Heart right ventricle (tissue), 16 donors: ENCODE measurements at regions of chr9 and their contacts with region 1.

Region 1: DNA sequence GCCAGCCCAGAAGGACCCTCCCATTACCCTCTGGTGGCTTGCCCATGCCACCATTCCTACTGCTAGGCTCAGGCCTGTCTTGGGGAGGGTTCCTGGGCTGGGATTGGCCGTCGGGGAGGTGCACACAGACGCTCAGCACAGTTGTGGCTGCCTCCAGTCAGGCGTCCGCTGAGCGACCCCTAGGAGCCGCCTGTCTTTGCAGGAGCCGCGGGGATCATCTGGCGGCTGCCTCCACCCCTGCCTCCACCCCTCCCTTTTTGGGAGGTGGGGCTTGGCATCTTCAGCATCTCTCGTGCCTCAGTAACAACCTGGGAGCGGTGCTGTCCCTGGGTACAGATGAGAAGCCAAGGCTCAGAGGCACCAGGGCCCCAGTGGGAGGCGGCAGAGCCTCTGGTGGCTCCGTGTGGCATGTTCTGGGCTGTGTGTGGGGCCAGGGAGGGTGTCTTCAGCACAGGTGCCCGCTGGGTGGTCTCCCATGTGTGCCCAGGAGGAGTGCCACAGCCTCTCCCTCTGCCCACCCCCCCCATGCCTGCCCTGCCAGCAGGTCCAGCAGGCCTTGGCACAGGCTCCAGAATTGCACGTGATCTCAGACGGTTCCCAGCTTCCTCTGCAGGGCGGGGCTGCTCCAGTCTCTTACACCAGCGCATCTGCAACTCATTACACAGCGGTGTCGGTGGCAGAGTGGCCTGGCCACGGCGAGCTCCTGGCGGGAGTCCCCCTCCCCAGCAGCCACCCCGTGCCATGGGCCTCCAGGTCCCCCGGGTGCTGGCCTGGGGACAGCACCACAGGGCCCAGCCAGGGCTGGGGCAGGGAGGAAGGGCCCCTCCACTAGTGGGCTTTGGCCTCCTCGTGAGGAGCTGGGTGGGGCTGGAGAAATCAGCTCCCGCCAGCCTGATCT is 39.8 kb downstream of the RXRA start:
- DNase-seq: peak; percentile 89 to 92
- ATAC-seq: peak; percentile 82 to 90 (median 87)
- H3K4me3 ChIP-seq: peak overlapping the region in 7 of 10 donors; percentile 3 to 45 (median 24)
- H3K27ac ChIP-seq: peak overlapping the region; percentile 11 to 94 (median 73)
- H3K4me1 ChIP-seq: peaks cover 59 to 91% (median 80%) of the 10 kb centered on the region in 9 donors
- H3K27me3 ChIP-seq: no peaks in the 10 kb centered on the region
- CTCF ChIP-seq: peak in 4 of 9 donors; percentile 15 to 42 (median 36)

Region 2: DNA sequence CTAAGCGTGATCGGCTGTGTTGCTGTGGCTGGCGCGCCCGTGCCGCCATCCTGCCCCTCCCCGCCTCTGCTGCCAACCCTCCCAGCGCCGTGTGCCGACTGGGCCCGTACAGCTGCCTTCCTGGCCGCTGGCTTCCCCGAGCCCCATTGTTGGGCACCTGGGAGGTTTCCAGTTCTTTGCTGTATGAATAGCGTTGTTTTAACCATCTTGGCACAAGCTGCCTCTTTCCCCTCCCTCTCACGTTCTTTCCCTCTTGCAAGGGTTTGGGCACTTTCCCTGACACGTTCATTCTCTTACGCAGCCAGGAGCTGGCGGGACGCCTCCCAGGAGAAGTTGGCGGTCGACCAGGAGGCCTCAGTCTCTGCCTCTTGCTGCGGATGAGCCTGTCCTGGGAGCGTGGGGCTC is 82.9 kb before region 1 on chr9:
- intact Hi-C with region 1: no loop called
- DNase-seq: peak; percentile 40 to 82
- ATAC-seq: peak; percentile 53 to 83 (median 74)
- H3K4me3 ChIP-seq: no peak overlapping the region
- H3K27ac ChIP-seq: peak overlapping the region in 6 of 10 donors; percentile 36 to 81 (median 67)
- H3K4me1 ChIP-seq: peaks cover 6 to 22% (median 11%) of the 10 kb centered on the region in 9 donors
- H3K27me3 ChIP-seq: peaks cover 0 to 14% (median 0%) of the 10 kb centered on the region in 7 donors
- CTCF ChIP-seq: no peak

Region 3: DNA sequence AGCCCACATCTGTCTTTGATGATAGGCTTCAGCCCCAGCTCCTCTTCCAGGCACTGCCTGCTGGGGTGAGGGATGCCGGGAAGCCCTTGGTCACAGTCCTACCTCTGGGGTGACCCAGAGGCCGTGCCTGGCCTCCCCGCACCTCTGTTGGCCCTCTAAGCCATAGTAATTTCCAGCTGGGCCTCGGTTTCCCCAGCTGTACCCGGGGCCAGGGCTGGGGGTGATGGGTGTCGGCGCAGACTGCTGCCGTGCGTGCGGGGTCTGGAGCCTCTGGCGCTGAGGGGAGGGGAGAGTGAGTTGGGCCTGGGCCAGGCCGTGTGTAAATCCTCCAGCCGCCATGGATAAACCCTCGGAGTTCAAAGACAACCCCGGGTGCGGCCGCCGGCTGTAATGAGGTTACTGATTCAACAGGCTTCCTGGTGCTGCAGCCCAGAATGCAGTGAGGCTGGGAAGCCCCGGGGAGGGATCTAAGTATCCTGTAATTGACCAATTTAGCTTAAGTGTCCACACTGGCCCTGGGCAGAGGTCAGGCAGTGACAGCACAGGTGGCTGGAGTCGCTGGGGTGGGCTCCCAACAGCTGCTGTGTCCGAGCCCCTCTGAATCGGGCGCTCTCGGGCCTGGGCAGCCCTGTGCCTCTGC is 32.7 kb before region 1 on chr9:
- intact Hi-C with region 1: loop called in 3 of 10 experiments (anchors 5 kb)
- DNase-seq: peak in 1 of 2 donors; percentile 34
- ATAC-seq: no peak
- H3K4me3 ChIP-seq: peak overlapping the region in 2 of 10 donors; percentile 1 to 18
- H3K27ac ChIP-seq: peak overlapping the region in 8 of 10 donors; percentile 1 to 84 (median 44)
- H3K4me1 ChIP-seq: peaks cover 78 to 100% (median 99%) of the 10 kb centered on the region in 9 donors
- H3K27me3 ChIP-seq: no peaks in the 10 kb centered on the region
- CTCF ChIP-seq: no peak

Region 4: DNA sequence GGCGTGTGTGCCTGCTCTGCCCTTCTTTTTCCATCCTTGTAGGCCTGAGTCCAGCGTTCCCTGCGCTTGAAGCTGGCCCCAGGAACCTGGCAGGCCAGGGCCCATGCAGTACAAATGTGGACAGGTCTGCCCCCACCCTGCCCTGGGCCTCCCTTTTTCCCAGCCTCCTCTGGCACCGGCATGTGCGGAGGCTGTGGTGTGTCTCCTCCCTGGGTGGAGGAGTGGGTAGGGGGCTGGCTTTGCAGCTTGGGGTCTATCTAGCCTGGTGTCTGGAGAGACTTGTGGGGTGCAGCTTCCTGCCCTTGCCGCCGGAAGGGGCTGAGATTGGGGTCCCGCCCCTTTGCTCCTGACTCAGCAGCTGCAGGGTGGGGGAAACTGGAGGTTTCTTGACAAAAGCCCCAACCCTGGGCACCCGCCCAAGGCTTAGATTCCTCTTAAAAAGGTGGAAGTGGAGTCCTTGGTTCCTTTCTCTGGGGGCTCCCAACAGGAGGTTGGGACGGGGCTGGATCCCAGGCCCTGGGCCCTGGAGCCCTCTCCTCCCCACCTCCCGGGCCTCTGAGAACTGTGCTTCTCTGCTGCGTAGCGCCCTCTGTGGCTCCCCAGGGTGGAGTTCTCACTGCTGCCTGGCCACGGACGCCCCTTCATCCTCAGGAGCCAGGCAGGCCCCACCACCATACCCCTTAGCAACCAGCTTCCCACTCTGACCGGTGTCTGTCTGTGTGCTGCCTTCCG is 21.8 kb before region 1 on chr9:
- intact Hi-C with region 1: no loop called
- DNase-seq: peak; percentile 57 to 66
- ATAC-seq: peak in 5 of 8 donors; percentile 3 to 9 (median 4)
- H3K4me3 ChIP-seq: peak overlapping the region in 1 of 10 donors; percentile 6
- H3K27ac ChIP-seq: peak overlapping the region; percentile 17 to 91 (median 70)
- H3K4me1 ChIP-seq: peaks cover 81 to 100% (median 98%) of the 10 kb centered on the region in 9 donors
- H3K27me3 ChIP-seq: no peaks in the 10 kb centered on the region
- CTCF ChIP-seq: peak in 4 of 9 donors; percentile 7 to 28 (median 21)